Activated T-helper 2 cell treated with anti-CD3 and anti-CD28 coated beads, Interferon-gamma antibody, Interleukin-2, Interleukin-4, amounts not matched to agents 10 μg/mL and 5 μg/mL and 100 μg/mL, durations not matched to agents 14 hours and 24 hours and 36 hours (primary cell): ENCODE measurements at regions of chr5 and their contacts with region 1.

Region 1: GRCh38 chr5:163437309-163438182 is at the start of gene CCNG1:
- DNase-seq: peak; percentile 89
- H3K4me3 Mint-ChIP-seq: peak within 1 kb of the TSS; percentile 92
- H3K27ac Mint-ChIP-seq: peak within 1 kb of the TSS; percentile 77
- H3K4me1 Mint-ChIP-seq: peaks cover 43% of the 10 kb centered on the region
- H3K27me3 Mint-ChIP-seq: peaks cover 6% of the 10 kb centered on the region
- total RNA-seq, gene CCNG1: 87.8 and 89.4 TPM in 2 replicates

Region 2: DNA sequence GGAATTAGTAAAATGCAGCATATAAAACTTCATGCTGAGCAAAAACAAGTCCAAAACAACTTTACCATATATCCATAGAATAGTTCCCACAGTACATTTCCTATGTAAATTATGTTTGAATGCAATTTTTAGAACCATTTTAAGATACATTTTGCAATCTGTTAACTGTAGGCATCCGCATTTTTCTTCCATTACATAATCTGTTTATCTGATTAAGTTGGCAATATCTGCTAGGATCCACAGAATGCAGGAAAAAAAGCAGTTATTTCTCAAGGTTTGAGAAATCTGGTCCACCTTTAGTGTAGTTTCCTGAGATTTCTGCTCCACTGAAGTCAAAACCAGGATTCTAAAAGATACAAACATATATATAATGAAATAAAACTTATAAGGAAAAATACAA is 16.2 kb after region 1 on chr5:
- intact Hi-C with region 1: loop called (anchors 1 kb)
- DNase-seq: no peak
- H3K4me3 Mint-ChIP-seq: no peak overlapping the region
- H3K27ac Mint-ChIP-seq: no peak overlapping the region
- H3K4me1 Mint-ChIP-seq: peaks cover 31% of the 10 kb centered on the region
- H3K27me3 Mint-ChIP-seq: no peaks in the 10 kb centered on the region

Region 3: DNA sequence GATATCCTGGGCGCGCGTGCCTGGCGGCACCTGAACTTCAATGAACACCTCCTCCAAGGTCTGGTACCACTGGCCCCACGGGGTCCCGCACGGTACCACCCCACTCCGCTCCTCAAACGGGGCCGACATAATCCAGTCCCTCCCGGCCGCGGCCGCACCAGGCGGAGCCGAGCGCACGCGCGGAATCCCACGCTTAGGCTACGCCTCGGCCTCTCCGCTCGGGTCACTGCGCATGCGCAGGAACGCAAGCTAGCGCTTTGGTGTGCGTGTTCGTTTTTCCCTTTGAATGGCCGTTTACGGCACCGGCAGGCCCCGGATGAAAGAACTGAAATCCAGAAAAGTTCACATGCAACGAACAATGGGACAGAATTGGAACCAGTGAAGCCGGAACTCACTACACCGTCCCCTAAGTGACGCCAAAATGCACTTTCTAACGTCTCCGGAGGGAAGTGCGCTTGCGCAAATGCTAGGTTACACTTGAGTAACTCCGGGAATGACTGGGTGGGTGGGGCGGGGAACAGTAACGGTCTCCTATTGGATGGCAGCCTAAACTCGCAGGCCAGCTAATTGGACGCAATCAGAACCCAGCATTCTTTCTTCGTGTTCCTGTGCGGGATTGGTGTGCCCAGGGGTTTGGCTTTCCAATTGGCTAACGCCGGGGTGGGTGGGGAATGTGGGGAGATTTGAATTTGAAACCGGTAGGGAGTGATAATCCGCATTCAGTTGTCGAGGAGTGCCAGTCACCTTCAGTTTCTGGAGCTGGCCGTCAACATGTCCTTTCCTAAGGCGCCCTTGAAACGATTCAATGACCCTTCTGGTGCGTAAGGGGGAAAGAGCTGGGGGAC is 22.6 kb after region 1 on chr5 and contains the starts of genes HMMR and NUDCD2:
- intact Hi-C with region 1: loop called (anchors 1 kb)
- DNase-seq: peak; percentile 92
- H3K4me3 Mint-ChIP-seq: peak within 1 kb of the TSS; percentile 95
- H3K27ac Mint-ChIP-seq: peak within 1 kb of the TSS; percentile 99
- H3K4me1 Mint-ChIP-seq: peaks cover 46% of the 10 kb centered on the region
- H3K27me3 Mint-ChIP-seq: no peaks in the 10 kb centered on the region
- total RNA-seq, gene HMMR: 39.3 and 40.3 TPM in 2 replicates
- total RNA-seq, gene NUDCD2: 39.6 and 48.0 TPM in 2 replicates